Posterior cingulate gyrus (tissue), 11 donors: ENCODE measurements at regions of chr2 and their contacts with region 1.

Region 1: GRCh38 chr2:172588931-172589330 is 33.0 kb downstream of the PDK1 start:
- DNase-seq: no peak

Region 2: DNA sequence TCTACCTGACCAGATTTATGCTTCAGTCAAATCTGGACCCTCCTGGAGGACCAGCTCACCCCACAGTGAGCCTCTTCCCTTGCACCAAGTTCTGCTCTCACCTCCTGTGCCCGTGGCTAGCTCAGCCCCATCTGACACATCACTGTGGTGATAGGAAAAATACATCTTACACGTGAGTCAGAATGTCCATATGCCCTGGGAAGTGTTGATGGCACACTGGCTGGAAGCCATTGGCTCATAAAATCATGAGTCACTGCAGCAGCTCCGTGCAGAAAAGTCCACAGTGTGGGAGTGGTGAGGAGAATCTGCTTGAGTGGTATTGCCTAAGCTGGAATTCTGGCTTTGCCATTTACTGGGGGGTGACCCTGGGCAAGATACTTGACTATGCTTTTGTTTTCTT is 104.1 kb after region 1 on chr2:
- intact Hi-C with region 1: no loop called
- DNase-seq: peak in 6 of 10 donors; percentile 29 to 90 (median 55)

Region 3: GRCh38 chr2:172710584-172711024 is 121.7 kb after region 1 on chr2:
- intact Hi-C with region 1: loop called (anchors 2 kb)
- DNase-seq: peak in 5 of 10 donors; percentile 28 to 87 (median 47)